Activated CD4-positive, alpha-beta T cell treated with anti-CD3 and anti-CD28 coated beads for 36 hours (primary cell): ENCODE measurements at regions of chr13 and their contacts with region 1.

Region 1: DNA sequence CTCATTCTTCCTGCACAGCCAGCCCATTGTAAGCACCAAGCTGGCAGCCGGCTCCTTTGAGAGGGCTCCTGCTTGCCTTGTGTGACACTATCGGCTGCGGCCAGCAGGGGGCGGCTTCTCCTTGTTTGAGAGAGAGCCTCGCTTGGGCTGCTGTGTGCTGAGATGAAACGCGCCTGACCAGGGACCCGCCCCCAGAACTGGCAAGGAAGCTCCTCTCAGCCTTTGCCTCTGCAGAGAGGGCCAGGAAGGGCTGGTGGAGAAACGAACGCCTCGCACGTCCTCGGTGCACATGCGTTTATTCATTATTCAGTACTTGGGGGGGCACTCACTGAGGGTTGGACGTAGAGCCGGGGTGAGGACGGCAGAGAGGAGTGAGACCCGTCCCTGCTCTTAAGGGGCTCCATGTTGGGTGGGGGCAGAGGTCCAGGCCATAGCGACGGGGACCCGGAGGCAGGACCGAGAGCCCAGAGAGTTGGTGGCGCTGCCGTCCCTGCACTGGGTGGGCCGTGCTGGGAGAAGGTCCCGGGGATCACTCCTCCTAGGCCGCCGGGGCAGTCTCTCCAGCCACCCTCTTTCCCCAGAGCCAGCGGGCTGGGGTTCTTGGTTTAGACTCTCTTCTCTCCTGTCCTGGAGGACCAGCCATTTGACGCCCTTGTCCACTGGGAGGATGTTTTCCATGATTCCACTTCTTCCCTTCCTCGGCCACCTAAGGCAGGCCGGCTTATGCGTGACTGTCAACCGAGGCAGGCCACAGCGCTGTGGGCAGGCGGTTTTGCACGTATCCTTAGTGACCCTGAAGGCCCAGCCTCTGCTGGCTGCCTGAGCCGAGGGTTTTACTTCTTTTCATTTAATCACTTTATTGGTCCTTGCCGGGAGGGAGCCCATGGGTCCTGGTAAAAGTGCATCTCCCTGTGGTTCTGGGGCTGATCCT is 174.5 kb downstream of the KATNAL1 start:
- DNase-seq: peak; percentile 99
- ATAC-seq: peak; percentile 99
- H3K4me3 Mint-ChIP-seq: no peak overlapping the region
- H3K27ac Mint-ChIP-seq: peak overlapping the region; percentile 79
- H3K4me1 Mint-ChIP-seq: peaks cover 12% of the 10 kb centered on the region
- H3K27me3 Mint-ChIP-seq: no peaks in the 10 kb centered on the region

Region 2: DNA sequence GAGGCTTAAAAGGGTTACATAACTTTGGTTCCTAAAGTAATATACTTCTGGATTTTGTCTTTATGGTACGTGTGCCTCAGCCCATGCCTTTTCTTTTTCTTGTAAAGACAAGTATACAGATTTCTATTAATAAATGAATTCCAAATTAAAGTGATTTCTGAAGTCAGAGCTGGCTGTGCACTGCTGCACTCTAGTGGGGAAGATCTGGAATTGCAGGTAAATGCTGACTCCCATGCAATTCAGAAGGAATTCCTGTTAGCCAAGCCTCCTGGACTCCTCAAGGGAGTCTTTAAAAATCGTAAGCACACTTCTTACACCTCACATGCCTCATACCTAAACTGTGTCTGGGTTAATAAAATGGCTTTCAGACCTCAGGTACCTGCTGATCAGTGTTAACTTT is 419.0 kb before region 1 on chr13:
- CTCF ChIA-PET with region 1: no interaction called
- POLR2A ChIA-PET with region 1: no interaction called
- intact Hi-C with region 1: no loop called
- DNase-seq: peak; percentile 21
- ATAC-seq: no peak
- H3K4me3 Mint-ChIP-seq: no peak overlapping the region
- H3K27ac Mint-ChIP-seq: no peak overlapping the region
- H3K4me1 Mint-ChIP-seq: no peaks in the 10 kb centered on the region
- H3K27me3 Mint-ChIP-seq: peaks cover 2% of the 10 kb centered on the region

Region 3: GRCh38 chr13:30153545-30154441 is 20.9 kb after region 1 on chr13:
- CTCF ChIA-PET with region 1: interaction called, 114 read pairs
- POLR2A ChIA-PET with region 1: interaction called, 3 read pairs
- intact Hi-C with region 1: loop called in 1 of 2 experiments (anchors 1 kb)
- DNase-seq: no peak
- ATAC-seq: no peak
- H3K4me3 Mint-ChIP-seq: no peak overlapping the region
- H3K27ac Mint-ChIP-seq: no peak overlapping the region
- H3K4me1 Mint-ChIP-seq: peaks cover 70% of the 10 kb centered on the region
- H3K27me3 Mint-ChIP-seq: no peaks in the 10 kb centered on the region

Region 4: GRCh38 chr13:30172593-30173302 is 39.9 kb after region 1 on chr13:
- CTCF ChIA-PET with region 1: interaction called, 13 read pairs
- POLR2A ChIA-PET with region 1: no interaction called
- intact Hi-C with region 1: no loop called
- DNase-seq: no peak
- ATAC-seq: no peak
- H3K4me3 Mint-ChIP-seq: no peak overlapping the region
- H3K27ac Mint-ChIP-seq: no peak overlapping the region
- H3K4me1 Mint-ChIP-seq: peaks cover 36% of the 10 kb centered on the region
- H3K27me3 Mint-ChIP-seq: no peaks in the 10 kb centered on the region

Region 5: DNA sequence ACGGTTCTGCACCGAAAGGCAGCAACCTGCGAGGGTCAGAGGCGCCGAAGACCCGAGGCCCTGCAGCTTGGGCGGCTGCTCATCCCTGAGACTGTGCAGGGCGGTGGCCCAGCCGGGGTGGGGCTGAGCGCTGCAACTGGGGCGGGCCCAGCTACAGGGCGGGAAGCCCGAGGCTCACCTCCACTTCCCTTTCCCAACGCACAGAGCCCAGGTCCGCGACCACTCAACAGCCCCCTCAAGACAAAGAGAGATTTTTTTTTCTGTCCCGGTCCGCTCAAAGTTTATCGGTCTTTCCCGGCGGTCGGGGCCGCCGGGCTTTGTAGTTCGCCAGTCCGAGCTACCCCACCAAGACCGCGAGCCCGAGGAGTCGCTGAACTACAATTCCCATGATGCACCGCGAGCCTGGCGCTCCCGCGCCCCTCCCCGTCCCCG is 173.9 kb after region 1 on chr13:
- CTCF ChIA-PET with region 1: interaction called, 12 read pairs
- POLR2A ChIA-PET with region 1: no interaction called
- intact Hi-C with region 1: loop called in 1 of 2 experiments (anchors 1 kb)
- DNase-seq: peak; percentile 95
- ATAC-seq: peak; percentile 91
- H3K4me3 Mint-ChIP-seq: peak overlapping the region; percentile 80
- H3K27ac Mint-ChIP-seq: peak overlapping the region; percentile 79
- H3K4me1 Mint-ChIP-seq: peaks cover 31% of the 10 kb centered on the region
- H3K27me3 Mint-ChIP-seq: no peaks in the 10 kb centered on the region

Region 6: GRCh38 chr13:30465585-30466357 is 332.9 kb after region 1 on chr13 and contains the start of gene HMGB1:
- CTCF ChIA-PET with region 1: interaction called, 4 read pairs
- POLR2A ChIA-PET with region 1: interaction called, 3 read pairs
- intact Hi-C with region 1: loop called (anchors 1 to 2 kb)
- DNase-seq: peak; percentile 98
- ATAC-seq: peak; percentile 93
- H3K4me3 Mint-ChIP-seq: peak within 1 kb of the TSS; percentile 86
- H3K27ac Mint-ChIP-seq: peak within 1 kb of the TSS; percentile 98
- H3K4me1 Mint-ChIP-seq: peaks cover 19% of the 10 kb centered on the region
- H3K27me3 Mint-ChIP-seq: no peaks in the 10 kb centered on the region
- total RNA-seq, gene HMGB1: 764 to 851 TPM

Region 7: GRCh38 chr13:30581582-30581981 is 448.7 kb after region 1 on chr13:
- CTCF ChIA-PET with region 1: interaction called, 4 read pairs
- POLR2A ChIA-PET with region 1: no interaction called
- intact Hi-C with region 1: loop called in 1 of 2 experiments (anchors 10 kb)
- DNase-seq: peak; percentile 12
- ATAC-seq: no peak
- H3K4me3 Mint-ChIP-seq: no peak overlapping the region
- H3K27ac Mint-ChIP-seq: no peak overlapping the region
- H3K4me1 Mint-ChIP-seq: peaks cover 16% of the 10 kb centered on the region
- H3K27me3 Mint-ChIP-seq: no peaks in the 10 kb centered on the region

Region 8: DNA sequence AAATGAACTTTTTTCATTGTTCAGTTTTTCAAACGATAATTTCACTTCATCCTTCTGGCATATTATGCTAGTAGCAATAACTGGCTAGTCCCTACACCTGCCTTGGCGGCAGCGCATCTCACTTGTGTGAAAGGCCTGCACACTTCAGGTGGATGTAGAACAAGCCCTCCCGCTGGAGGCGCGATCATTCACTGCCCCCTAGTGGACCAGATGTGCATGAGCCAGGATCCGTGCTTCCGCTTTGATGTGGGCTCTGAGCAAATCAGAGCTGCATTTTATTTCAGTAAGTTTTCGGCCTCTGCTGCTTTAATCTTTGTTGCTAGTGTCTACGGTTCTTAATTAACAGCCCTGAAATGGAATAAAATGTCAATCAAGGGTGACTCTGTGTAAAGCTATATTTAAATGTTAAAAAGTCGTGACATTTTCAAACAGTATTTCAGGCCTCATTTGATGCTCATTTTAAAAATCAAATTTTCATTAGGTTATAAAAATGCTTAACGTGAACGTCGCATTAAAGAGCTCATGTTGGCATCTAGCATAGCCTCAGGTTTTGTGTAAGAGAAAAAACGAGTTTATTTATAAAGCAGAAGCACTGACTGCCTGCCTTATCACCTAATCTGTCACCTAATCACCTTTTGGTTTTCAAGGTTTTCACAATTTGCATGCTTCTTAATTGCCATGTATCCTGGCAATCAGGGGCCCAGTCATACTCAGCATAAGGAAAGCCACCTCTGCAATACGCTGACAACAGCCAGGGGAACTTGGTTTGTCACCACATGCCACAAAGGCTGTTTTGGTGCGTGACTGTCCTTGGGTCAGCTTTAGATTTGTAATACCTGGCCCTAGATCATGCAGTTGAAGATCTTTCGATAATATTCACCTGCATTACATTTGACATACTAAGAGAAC is 911.7 kb after region 1 on chr13:
- CTCF ChIA-PET with region 1: no interaction called
- POLR2A ChIA-PET with region 1: no interaction called
- intact Hi-C with region 1: loop called in 1 of 2 experiments (anchors 5 kb)
- DNase-seq: peak; percentile 91
- ATAC-seq: peak; percentile 69
- H3K4me3 Mint-ChIP-seq: peak overlapping the region; percentile 28
- H3K27ac Mint-ChIP-seq: peak overlapping the region; percentile 89
- H3K4me1 Mint-ChIP-seq: peaks cover 46% of the 10 kb centered on the region
- H3K27me3 Mint-ChIP-seq: peaks cover 6% of the 10 kb centered on the region